Activated CD4-positive, alpha-beta T cell treated with anti-CD3 and anti-CD28 coated beads for 36 hours (primary cell): ENCODE measurements at regions of chrX and their contacts with region 1.

Region 1: DNA sequence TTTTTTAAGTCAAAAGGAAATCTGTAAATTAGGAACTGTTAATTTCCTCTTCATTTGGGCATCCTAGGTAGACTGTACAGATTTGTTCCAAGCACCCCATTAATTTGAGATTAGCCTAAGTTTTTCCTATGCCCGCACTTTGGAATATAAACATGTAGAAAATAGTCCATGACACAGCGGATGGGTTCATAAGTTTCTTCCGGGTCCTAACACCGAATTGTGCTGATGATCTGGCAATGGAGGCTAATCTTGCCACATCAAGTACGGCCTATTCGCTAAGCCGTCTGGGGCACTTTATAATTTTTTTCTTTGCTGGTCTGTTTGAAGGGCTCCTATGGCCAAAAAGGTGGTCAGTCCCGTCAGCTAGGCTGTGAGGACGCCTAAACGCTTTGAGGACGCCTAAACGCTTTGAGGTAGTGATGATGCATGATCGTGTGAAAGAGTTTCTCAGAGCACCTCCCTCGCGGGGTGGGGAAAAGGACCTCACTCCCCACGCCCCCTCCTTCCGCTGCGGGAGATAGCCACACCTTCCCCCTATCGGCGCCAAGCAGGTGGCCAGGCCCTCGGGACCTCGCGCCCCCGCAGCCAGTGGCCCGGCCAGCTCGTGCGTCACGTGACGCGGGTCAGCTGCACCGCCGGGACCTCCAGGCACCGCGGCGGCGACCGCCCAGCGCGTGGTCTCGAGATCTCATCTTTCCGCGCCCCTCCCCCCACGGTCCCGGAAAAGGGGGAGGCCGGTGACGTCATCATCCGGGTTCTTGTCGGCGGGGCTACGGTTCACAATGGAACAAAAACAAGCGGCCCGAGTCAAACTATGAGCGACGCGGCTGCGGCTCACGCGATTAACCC is 977 bp upstream of the USP9X start:
- DNase-seq: peak; percentile 96
- ATAC-seq: peak; percentile 67
- H3K4me3 Mint-ChIP-seq: peak overlapping the region; percentile 80
- H3K27ac Mint-ChIP-seq: peak overlapping the region; percentile 99
- H3K4me1 Mint-ChIP-seq: peaks cover 14% of the 10 kb centered on the region
- H3K27me3 Mint-ChIP-seq: no peaks in the 10 kb centered on the region

Region 2: DNA sequence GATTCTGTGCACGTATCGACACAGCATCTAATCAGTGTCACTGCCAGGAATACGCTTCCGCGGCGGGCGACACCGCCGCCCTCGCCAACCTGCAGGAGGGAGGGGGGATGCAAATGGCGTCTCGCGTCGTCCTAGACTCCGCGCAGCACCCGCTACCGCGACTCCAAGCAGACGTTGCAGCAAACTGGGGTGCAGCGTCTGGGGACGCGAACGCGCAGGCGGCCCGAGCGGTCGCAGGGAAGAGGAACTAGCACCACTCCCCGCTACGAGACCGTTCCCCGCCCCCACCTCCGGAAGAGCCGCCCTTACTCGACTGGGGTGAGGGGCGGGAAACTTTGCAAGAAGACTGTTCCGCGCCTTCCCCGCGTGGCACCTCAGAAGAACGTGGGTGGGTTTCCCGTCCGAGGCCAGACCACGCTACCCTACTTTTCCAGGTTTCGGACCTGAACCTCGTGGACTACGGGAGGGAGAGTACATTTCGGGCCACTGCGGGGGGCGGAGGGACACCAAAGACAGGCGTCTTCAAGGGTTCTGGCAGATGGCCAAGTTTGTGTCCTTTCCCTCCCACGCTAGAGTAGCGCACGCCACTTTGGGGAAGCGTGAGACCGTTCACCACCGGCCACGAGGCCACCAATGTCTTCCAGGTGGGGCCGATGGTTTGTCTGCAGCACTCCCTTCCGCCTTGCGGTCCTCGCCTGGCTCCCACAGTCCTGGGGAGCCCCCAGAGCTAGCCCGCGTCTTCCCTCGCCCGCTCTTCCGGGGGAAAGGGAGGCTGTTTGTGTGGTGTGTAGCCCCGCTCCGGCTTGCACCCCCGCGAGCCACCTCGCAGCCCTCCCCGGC is 908.5 kb before region 1 on chrX:
- CTCF ChIA-PET with region 1: no interaction called
- POLR2A ChIA-PET with region 1: no interaction called
- intact Hi-C with region 1: loop called in 1 of 2 experiments (anchors 2 kb)
- DNase-seq: peak; percentile 84
- ATAC-seq: peak; percentile 37
- H3K4me3 Mint-ChIP-seq: peak overlapping the region; percentile 80
- H3K27ac Mint-ChIP-seq: peak overlapping the region; percentile 99
- H3K4me1 Mint-ChIP-seq: peaks cover 25% of the 10 kb centered on the region
- H3K27me3 Mint-ChIP-seq: no peaks in the 10 kb centered on the region

Region 3: GRCh38 chrX:40647307-40648197 is 436.7 kb before region 1 on chrX and contains the start of gene CXorf38:
- CTCF ChIA-PET with region 1: no interaction called
- POLR2A ChIA-PET with region 1: no interaction called
- intact Hi-C with region 1: loop called (anchors 1 to 10 kb)
- DNase-seq: peak; percentile 94
- ATAC-seq: peak; percentile 78
- H3K4me3 Mint-ChIP-seq: peak within 1 kb of the TSS; percentile 97
- H3K27ac Mint-ChIP-seq: peak within 1 kb of the TSS; percentile 95
- H3K4me1 Mint-ChIP-seq: peaks cover 23% of the 10 kb centered on the region
- H3K27me3 Mint-ChIP-seq: no peaks in the 10 kb centered on the region
- total RNA-seq, gene CXorf38: 15.8 to 20.5 TPM

Region 4: GRCh38 chrX:40933132-40933705 is 151.0 kb before region 1 on chrX:
- CTCF ChIA-PET with region 1: no interaction called
- POLR2A ChIA-PET with region 1: no interaction called
- intact Hi-C with region 1: loop called in 1 of 2 experiments (anchors 1 kb)
- DNase-seq: peak; percentile 40
- ATAC-seq: peak; percentile 74
- H3K4me3 Mint-ChIP-seq: peak overlapping the region; percentile 67
- H3K27ac Mint-ChIP-seq: peak overlapping the region; percentile 95
- H3K4me1 Mint-ChIP-seq: peaks cover 20% of the 10 kb centered on the region
- H3K27me3 Mint-ChIP-seq: no peaks in the 10 kb centered on the region

Region 5: GRCh38 chrX:41095908-41096307 is 11.6 kb after region 1 on chrX:
- CTCF ChIA-PET with region 1: interaction called, 5 read pairs
- POLR2A ChIA-PET with region 1: interaction called, 11 read pairs
- intact Hi-C with region 1: no loop called
- DNase-seq: peak; percentile 7
- ATAC-seq: no peak
- H3K4me3 Mint-ChIP-seq: no peak overlapping the region
- H3K27ac Mint-ChIP-seq: peak overlapping the region; percentile 35
- H3K4me1 Mint-ChIP-seq: peaks cover 68% of the 10 kb centered on the region
- H3K27me3 Mint-ChIP-seq: no peaks in the 10 kb centered on the region

Region 6: GRCh38 chrX:41441934-41442823 is 357.9 kb after region 1 on chrX:
- CTCF ChIA-PET with region 1: no interaction called
- POLR2A ChIA-PET with region 1: no interaction called
- intact Hi-C with region 1: loop called in 1 of 2 experiments (anchors 2 kb)
- DNase-seq: peak; percentile 92
- ATAC-seq: peak; percentile 94
- H3K4me3 Mint-ChIP-seq: peak overlapping the region; percentile 56
- H3K27ac Mint-ChIP-seq: peak overlapping the region; percentile 85
- H3K4me1 Mint-ChIP-seq: peaks cover 15% of the 10 kb centered on the region
- H3K27me3 Mint-ChIP-seq: no peaks in the 10 kb centered on the region